Right ventricle myocardium inferior (tissue), 1 donor: ENCODE measurements at regions of chr10 and their contacts with region 1.

Region 1: DNA sequence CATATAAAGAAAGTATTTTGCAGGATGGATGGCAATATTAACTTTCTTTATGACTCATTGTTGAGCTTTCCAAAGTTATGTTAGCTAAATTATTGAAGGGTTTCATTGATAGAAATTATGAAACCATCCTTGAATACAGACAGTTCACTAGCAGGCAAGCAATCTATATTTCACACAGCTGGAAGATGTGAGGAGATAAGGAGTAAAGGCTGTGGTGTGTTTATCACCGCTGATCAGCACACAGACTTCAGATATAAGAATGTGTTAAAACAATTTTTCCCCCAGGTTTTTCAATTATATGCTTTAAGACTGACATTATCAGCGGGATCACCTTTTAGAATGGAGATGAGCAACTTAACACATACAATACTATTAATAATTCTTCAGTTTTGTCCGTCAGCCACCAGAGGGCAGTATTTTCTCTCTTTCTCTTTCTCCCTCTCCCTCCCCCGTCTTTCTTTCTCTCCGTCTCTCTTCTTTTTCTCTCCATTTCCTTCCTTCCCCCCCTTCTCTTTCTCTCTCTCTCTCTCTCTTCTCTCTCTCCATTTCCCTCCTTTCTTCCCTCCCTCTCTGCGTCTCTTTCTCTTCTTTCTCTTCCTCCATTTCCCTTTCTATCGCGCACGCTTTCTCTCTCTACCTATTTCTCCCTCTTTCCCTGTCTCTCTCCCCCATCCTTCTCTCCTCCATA is 62.9 kb upstream of the FAM171A1 start:
- DNase-seq: no peak
- ATAC-seq: peak; percentile 56

Region 2: GRCh38 chr10:15725603-15726002 is 291.6 kb after region 1 on chr10:
- intact Hi-C with region 1: loop called (anchors 5 kb)
- DNase-seq: no peak
- ATAC-seq: peak; percentile 68

Region 3: GRCh38 chr10:15824498-15824897 is 390.5 kb after region 1 on chr10:
- intact Hi-C with region 1: loop called (anchors 5 kb)
- DNase-seq: no peak
- ATAC-seq: no peak